Esophagus muscularis mucosa (tissue), 4 donors: ENCODE measurements at regions of chr7 and their contacts with region 1.

Region 1: GRCh38 chr7:191981-192649 is at the start of gene FAM20C:
- DNase-seq: peak; percentile 96
- H3K4me3 ChIP-seq: peak within 1 kb of the TSS; percentile 70 to 91 (median 83)
- H3K27ac ChIP-seq: peak within 1 kb of the TSS; percentile 92 to 97 (median 96)
- H3K4me1 ChIP-seq: peaks cover 32 to 56% (median 50%) of the 10 kb centered on the region in 4 donors
- H3K27me3 ChIP-seq: no peaks in the 10 kb centered on the region
- CTCF ChIP-seq: no peak
- EP300 ChIP-seq: no peak
- POLR2A ChIP-seq: peak; percentile 63
- total RNA-seq, gene FAM20C: 46.5 to 79.2 (median 69.8) TPM

Region 2: GRCh38 chr7:131781-132482 is 60.2 kb before region 1 on chr7:
- intact Hi-C with region 1: no loop called
- DNase-seq: no peak
- H3K4me3 ChIP-seq: no peak overlapping the region
- H3K27ac ChIP-seq: peak overlapping the region in 2 of 4 donors; percentile 15 to 57
- H3K4me1 ChIP-seq: peaks cover 18 to 43% (median 40%) of the 10 kb centered on the region in 4 donors
- H3K27me3 ChIP-seq: no peaks in the 10 kb centered on the region
- CTCF ChIP-seq: no peak
- EP300 ChIP-seq: no peak
- POLR2A ChIP-seq: no peak

Region 3: GRCh38 chr7:148932-149855 is 42.9 kb before region 1 on chr7:
- intact Hi-C with region 1: loop called (anchors 5 kb)
- DNase-seq: peak; percentile 99
- H3K4me3 ChIP-seq: peak overlapping the region; percentile 51 to 67 (median 64)
- H3K27ac ChIP-seq: peak overlapping the region; percentile 92 to 98 (median 96)
- H3K4me1 ChIP-seq: peaks cover 7 to 26% (median 21%) of the 10 kb centered on the region in 4 donors
- H3K27me3 ChIP-seq: no peaks in the 10 kb centered on the region
- CTCF ChIP-seq: peak in 1 of 3 experiments; percentile 18
- EP300 ChIP-seq: no peak
- POLR2A ChIP-seq: peak; percentile 66

Region 4: GRCh38 chr7:234655-235578 is 42.8 kb after region 1 on chr7:
- intact Hi-C with region 1: loop called (anchors 5 kb)
- DNase-seq: no peak
- H3K4me3 ChIP-seq: peak overlapping the region; percentile 37 to 47 (median 38)
- H3K27ac ChIP-seq: peak overlapping the region; percentile 89 to 98 (median 96)
- H3K4me1 ChIP-seq: peaks cover 60 to 73% (median 70%) of the 10 kb centered on the region in 4 donors
- H3K27me3 ChIP-seq: no peaks in the 10 kb centered on the region
- CTCF ChIP-seq: no peak
- EP300 ChIP-seq: peak; percentile 70
- POLR2A ChIP-seq: no peak